SK-N-SH (cell line): ENCODE measurements at regions of chr1 and their contacts with region 1.

Region 1: DNA sequence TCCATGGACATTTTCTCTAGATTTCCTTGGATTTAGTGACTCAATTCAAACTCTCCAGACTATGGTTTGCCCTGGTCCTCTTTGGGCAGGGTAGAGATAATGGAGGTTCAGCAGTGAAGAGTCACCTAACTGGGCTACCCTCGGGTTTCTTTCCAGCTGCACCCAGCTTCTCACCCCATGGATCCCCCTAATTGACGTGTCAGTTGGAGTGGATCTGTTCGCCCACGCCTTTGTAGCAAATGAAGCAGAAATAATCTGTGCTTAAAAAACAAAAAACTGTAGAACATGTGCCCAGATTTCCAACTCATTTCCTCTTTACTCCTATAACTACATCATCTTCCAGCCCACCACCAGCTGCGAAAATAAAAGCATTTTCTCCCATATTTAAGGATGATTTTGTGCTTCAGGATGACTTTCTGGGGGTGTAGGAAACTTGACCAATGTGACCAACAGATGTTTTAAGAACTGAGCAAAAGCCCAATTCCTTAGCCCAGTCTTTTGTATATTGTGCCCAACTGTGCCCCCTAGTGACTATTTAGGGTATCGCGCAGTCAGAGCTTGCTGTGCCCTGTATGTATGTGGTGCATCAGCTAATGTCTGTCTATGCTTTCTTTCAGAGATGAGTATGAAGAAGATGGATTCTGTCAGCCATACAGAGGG is 66.5 kb upstream of the UBE2U start:
- DNase-seq: peak; percentile 57
- H3K4me3 ChIP-seq: peak overlapping the region in 1 of 2 experiments; percentile 16; a peak in 1 of 4 replicates
- H3K27ac ChIP-seq: peak overlapping the region; percentile 43 to 61; a peak in 3 of 4 replicates
- H3K4me1 ChIP-seq: peaks cover 13 to 24% of the 10 kb centered on the region in 2 experiments
- H3K27me3 ChIP-seq: no peaks in the 10 kb centered on the region
- CTCF ChIP-seq: peak; percentile 97
- EP300 ChIP-seq: no peak
- RAD21 ChIP-seq: peak; percentile 95

Region 2: GRCh38 chr1:63773815-63774616 is 362.9 kb before region 1 on chr1 and contains the start of gene ROR1:
- CTCF ChIA-PET with region 1: interaction called, 61 read pairs
- POLR2A ChIA-PET with region 1: interaction called, 3 read pairs
- DNase-seq: peak; percentile 95
- H3K4me3 ChIP-seq: peak within 1 kb of the TSS; percentile 84 to 91
- H3K27ac ChIP-seq: peak within 1 kb of the TSS; percentile 15 to 85; a peak in 3 of 4 replicates
- H3K4me1 ChIP-seq: peaks cover 0 to 11% of the 10 kb centered on the region in 2 experiments; a peak in 3 of 4 replicates
- H3K27me3 ChIP-seq: no peaks in the 10 kb centered on the region
- CTCF ChIP-seq: peak; percentile 69
- EP300 ChIP-seq: no peak
- RAD21 ChIP-seq: peak; percentile 84
- polyA plus RNA-seq, gene ROR1: 4.0 and 5.5 TPM in 2 replicates

Region 3: GRCh38 chr1:63935143-63935542 is 201.7 kb before region 1 on chr1:
- CTCF ChIA-PET with region 1: interaction called, 33 read pairs
- POLR2A ChIA-PET with region 1: no interaction called
- DNase-seq: peak; percentile 15
- H3K4me3 ChIP-seq: no peak overlapping the region
- H3K27ac ChIP-seq: peak overlapping the region in 1 of 2 experiments; percentile 73; a peak in 2 of 4 replicates
- H3K4me1 ChIP-seq: peaks cover 0 to 4% of the 10 kb centered on the region in 2 experiments; a peak in 2 of 4 replicates
- H3K27me3 ChIP-seq: no peaks in the 10 kb centered on the region
- CTCF ChIP-seq: peak; percentile 52
- EP300 ChIP-seq: no peak
- RAD21 ChIP-seq: peak; percentile 65

Region 4: DNA sequence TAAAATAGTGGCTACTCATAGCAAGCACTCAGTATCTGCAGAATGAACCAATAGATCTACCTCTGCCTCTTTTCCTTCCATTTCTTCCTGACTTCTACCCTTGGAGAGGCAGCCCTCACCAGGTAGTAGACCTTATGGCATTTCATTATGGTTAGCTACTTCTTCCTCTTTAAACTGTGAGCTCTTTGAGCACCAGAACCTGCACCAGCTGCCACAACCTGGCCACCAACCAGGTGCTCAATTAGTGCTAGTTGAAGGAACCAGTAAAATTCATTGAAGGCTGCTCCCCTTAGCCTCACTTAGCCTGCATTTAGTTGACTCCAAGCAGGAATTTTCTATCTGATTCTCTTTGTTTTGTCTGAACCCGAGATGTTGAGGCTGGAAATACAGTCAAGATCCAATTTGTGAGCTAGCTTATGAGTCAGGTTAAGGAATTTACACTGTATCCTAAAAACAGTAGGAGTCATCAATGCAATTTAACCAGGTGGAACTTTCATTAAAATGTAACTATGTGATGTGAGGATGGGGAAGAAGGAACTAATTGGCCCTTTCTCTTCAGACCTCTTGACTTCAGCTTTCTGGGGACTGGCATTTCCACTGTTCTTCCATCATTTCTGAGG is 15.0 kb before region 1 on chr1:
- CTCF ChIA-PET with region 1: interaction called, 17 read pairs
- POLR2A ChIA-PET with region 1: no interaction called
- DNase-seq: no peak
- H3K4me3 ChIP-seq: no peak overlapping the region
- H3K27ac ChIP-seq: no peak overlapping the region
- H3K4me1 ChIP-seq: peaks cover 0 to 3% of the 10 kb centered on the region in 2 experiments; a peak in 1 of 4 replicates
- H3K27me3 ChIP-seq: no peaks in the 10 kb centered on the region
- CTCF ChIP-seq: no peak
- EP300 ChIP-seq: no peak
- RAD21 ChIP-seq: no peak

Region 5: DNA sequence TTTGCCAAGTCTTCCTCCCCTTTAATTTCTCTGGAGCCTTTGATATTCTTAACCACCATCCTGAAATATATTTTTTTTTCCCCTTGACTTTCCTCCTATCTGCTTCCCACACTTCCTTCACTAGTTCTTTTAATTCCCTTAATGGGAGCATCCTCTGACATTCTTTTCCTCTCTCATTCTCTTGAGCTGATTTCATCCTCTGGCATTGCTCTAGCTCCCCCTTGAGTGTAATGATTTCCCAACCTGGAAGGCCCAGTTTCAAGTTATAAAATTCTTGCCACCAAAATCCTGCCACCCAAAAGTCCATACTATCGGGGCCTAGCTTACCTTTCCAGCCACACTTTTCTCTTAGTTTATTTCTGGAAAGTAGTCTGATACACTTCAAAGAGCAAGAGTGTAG is 27.1 kb after region 1 on chr1:
- CTCF ChIA-PET with region 1: interaction called, 49 read pairs
- POLR2A ChIA-PET with region 1: no interaction called
- DNase-seq: peak; percentile 24
- H3K4me3 ChIP-seq: no peak overlapping the region
- H3K27ac ChIP-seq: peak overlapping the region in 1 of 2 experiments; percentile 62; a peak in 2 of 4 replicates
- H3K4me1 ChIP-seq: peaks cover 0 to 11% of the 10 kb centered on the region in 2 experiments; a peak in 2 of 4 replicates
- H3K27me3 ChIP-seq: no peaks in the 10 kb centered on the region
- CTCF ChIP-seq: peak; percentile 69
- EP300 ChIP-seq: no peak
- RAD21 ChIP-seq: peak; percentile 74

Region 6: DNA sequence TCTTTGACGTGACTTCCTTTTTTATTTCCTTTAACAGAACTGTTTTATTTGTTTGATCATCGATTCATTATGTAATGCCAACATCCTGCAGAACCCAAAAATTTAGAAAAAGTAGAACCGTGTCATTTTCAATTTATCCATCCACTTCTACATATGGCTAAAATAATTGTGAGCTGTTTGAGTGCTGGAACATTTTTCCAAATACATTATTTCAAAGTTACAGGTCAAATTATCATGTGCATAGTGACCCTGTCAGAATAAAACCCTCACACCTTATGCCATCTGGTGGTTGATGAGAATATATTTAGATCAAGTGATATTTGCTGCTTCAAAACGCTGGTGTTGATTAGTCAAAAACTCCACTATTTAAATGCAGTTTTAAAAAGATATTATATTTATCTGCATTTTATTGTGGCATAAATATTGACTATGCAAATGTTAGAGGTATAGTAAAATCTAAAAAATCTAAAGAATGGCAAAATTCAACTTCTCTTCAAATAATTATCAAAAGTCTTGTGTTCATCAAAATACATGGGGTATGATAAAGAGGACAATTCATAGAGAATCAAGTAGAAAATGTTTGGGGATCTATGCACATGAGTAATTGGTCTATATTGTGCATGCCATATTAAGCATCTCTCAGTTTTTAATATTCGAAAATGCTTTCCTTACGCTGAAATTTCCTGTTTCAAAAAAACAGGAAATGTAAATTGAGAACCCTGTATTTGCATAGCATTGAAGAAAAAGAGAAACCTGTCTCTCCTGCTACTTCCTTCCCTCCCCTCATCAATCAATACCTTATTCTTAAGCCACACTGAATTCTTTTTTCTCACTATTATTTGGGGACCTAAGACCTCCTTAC is 106.2 kb after region 1 on chr1:
- CTCF ChIA-PET with region 1: interaction called, 33 read pairs
- POLR2A ChIA-PET with region 1: interaction called, 3 read pairs
- DNase-seq: peak; percentile 41
- H3K4me3 ChIP-seq: 0 out of 4 replicates have a peak overlapping the region, but pooled peaks of 1 of the 2 experiments have one; percentile 1
- H3K27ac ChIP-seq: peak overlapping the region in 1 of 2 experiments; percentile 91; a peak in 2 of 4 replicates
- H3K4me1 ChIP-seq: peaks cover 10 to 22% of the 10 kb centered on the region in 2 experiments; a peak in 3 of 4 replicates
- H3K27me3 ChIP-seq: no peaks in the 10 kb centered on the region
- CTCF ChIP-seq: peak; percentile 72
- EP300 ChIP-seq: no peak
- RAD21 ChIP-seq: peak; percentile 93